ENCODE measurements at regions of chr16 and their contacts with region 1.

Region 1: DNA sequence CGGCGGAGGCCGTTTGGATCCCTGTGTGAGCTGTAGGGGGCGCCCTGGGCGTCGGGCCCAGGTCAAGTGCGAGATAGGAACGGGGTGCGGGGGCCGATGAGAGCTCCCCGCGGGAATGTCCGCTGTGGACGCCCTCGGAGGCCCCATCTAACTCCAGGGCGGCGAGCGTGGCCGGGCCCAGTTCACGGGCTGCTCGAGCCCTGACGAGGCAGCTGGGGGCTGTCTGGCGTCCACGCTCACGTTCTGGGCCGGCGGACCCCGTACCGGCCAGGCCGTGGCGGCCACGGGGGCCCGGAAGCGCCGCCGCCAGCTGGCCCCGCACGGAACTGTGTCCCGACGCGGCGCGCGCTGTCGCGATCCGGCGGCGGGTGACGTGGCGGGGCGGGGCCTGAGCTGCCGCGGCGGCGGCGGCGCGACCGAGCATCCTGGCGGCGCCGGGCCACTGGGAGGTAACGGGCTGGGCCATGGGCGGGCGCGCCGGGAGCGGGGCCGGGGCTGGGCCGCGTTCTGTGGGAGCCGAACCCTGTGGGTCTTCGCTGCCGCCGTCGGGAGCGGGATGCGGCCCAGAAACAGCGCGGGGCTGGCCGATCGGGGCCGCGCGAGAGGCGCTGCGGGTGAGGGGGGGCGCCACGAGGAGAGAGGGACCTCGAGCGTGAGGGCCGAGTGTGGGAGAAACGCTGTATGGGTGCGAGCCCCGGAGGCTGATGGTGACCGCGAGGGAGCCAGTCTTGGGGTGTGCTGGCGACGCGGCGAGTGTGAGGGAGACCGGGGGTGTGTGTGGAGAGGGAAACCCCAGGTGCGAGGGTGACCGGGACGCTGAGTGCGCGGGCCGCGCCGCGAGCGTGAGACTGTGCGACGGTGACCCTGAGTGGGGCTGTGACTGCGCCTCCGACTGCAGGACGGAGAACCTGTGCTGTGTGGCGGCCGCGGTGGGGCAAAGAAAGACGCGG is at the start of gene SLC7A6:
- DNase-seq: peak; percentile 85
- H3K4me3 Mint-ChIP-seq: peak within 1 kb of the TSS; percentile 94
- H3K27ac Mint-ChIP-seq: peak within 1 kb of the TSS; percentile 99
- H3K4me1 Mint-ChIP-seq: peaks cover 54% of the 10 kb centered on the region
- H3K27me3 Mint-ChIP-seq: no peaks in the 10 kb centered on the region
- total RNA-seq, gene SLC7A6: 139 and 143 TPM in 2 replicates

Region 2: DNA sequence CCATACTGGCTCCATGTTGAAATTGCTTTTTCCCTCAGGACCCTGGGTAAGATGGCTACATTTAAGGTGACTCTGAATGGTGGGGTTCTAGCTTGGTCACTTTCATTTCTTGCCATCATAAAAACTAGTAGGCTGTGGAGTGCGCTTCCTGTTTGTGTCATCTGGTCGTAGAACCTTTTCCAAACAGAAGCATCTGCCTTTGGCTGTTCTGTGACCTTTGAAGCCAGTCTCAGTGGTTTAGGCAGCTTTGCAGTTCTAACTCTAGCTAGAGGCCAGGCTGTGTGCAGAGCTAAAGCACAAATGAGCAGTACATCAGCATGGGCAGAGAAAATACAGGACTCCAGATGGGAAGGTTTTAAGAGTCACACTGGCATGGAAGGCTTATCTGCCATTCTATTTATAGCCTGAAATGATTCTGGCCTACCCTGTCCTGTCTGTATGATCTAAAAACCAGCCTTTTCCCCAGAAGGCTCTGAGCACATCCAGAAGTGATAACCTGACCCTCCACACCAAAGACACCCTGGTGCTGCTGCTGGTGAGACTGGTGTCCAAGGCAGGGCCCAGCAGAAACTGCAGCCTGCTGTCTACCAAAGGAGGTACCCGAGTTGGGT is 37.1 kb before region 1 on chr16:
- intact Hi-C with region 1: no loop called
- DNase-seq: no peak
- H3K4me3 Mint-ChIP-seq: peak overlapping the region; percentile 19
- H3K27ac Mint-ChIP-seq: peak overlapping the region; percentile 61
- H3K4me1 Mint-ChIP-seq: peaks cover 45% of the 10 kb centered on the region
- H3K27me3 Mint-ChIP-seq: no peaks in the 10 kb centered on the region

Region 3: GRCh38 chr16:68244903-68245853 is 19.2 kb before region 1 on chr16 and contains the start of gene PLA2G15:
- intact Hi-C with region 1: loop called (anchors 1 kb)
- DNase-seq: peak; percentile 93
- H3K4me3 Mint-ChIP-seq: peak within 1 kb of the TSS; percentile 99
- H3K27ac Mint-ChIP-seq: peak within 1 kb of the TSS; percentile 82
- H3K4me1 Mint-ChIP-seq: peaks cover 18% of the 10 kb centered on the region
- H3K27me3 Mint-ChIP-seq: peaks cover 5% of the 10 kb centered on the region
- total RNA-seq, gene PLA2G15: 8.6 and 8.8 TPM in 2 replicates

Region 4: DNA sequence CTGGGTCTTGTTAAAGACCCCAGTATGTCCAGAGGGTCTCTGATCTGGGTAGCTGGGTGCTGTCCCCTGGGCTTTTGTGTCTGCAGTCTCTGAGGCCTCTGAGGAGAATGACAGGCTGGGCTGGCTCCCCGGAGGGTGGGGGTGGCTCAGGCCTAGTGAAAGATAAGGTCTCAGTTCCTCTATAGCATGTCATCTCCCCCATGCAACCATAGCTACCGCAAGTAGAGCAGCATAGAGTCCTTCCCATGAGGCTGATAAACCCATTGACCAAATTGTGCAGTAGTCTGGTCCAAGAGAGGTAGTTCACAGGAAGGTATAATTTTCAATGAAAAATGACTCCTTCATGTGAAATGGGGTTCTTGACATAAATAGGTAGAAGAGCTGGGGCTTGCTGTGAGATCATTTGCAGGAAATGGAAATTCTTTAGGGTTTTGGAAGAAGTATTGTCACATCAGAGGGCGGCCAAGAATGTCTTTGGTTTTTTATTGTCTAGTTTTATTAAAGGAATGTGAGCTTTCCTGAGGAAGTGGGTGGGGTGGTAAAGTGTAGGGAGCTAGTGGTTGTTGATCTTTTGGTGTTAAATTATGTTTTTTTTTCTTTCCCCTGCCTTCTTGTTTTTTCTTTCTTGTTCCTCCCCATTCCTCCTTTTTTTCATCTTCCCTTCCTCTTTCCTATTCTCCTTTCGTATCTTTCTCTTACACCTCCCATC is 25.4 kb after region 1 on chr16:
- intact Hi-C with region 1: loop called (anchors 1 kb)
- DNase-seq: peak; percentile 40
- H3K4me3 Mint-ChIP-seq: peak overlapping the region; percentile 67
- H3K27ac Mint-ChIP-seq: peak overlapping the region; percentile 97
- H3K4me1 Mint-ChIP-seq: peaks cover 92% of the 10 kb centered on the region
- H3K27me3 Mint-ChIP-seq: no peaks in the 10 kb centered on the region

Region 5: GRCh38 chr16:68319185-68319908 is 54.9 kb after region 1 on chr16:
- intact Hi-C with region 1: loop called (anchors 2 kb)
- DNase-seq: peak; percentile 43
- H3K4me3 Mint-ChIP-seq: peak overlapping the region; percentile 66
- H3K27ac Mint-ChIP-seq: peak overlapping the region; percentile 89
- H3K4me1 Mint-ChIP-seq: peaks cover 38% of the 10 kb centered on the region
- H3K27me3 Mint-ChIP-seq: no peaks in the 10 kb centered on the region

Region 6: GRCh38 chr16:68512183-68512582 is 247.8 kb after region 1 on chr16:
- intact Hi-C with region 1: loop called (anchors 5 kb)
- DNase-seq: no peak
- H3K4me3 Mint-ChIP-seq: no peak overlapping the region
- H3K27ac Mint-ChIP-seq: no peak overlapping the region
- H3K4me1 Mint-ChIP-seq: no peaks in the 10 kb centered on the region
- H3K27me3 Mint-ChIP-seq: peaks cover 26% of the 10 kb centered on the region